Activated CD4-positive, alpha-beta T cell treated with anti-CD3 and anti-CD28 coated beads for 36 hours (primary cell): ENCODE measurements at regions of chr18 and their contacts with region 1.

Region 1: GRCh38 chr18:48445540-48445939 is 36.4 kb upstream of the ZBTB7C start:
- DNase-seq: peak; percentile 85
- ATAC-seq: peak; percentile 76
- H3K4me3 Mint-ChIP-seq: no peak overlapping the region
- H3K27ac Mint-ChIP-seq: no peak overlapping the region
- H3K4me1 Mint-ChIP-seq: peaks cover 3% of the 10 kb centered on the region
- H3K27me3 Mint-ChIP-seq: peaks cover 25% of the 10 kb centered on the region

Region 2: GRCh38 chr18:47772374-47773248 is 672.9 kb before region 1 on chr18:
- CTCF ChIA-PET with region 1: interaction called, 5 read pairs
- POLR2A ChIA-PET with region 1: no interaction called
- intact Hi-C with region 1: loop called (anchors 5 kb)
- DNase-seq: peak; percentile 84
- ATAC-seq: peak; percentile 76
- H3K4me3 Mint-ChIP-seq: no peak overlapping the region
- H3K27ac Mint-ChIP-seq: no peak overlapping the region
- H3K4me1 Mint-ChIP-seq: no peaks in the 10 kb centered on the region
- H3K27me3 Mint-ChIP-seq: peaks cover 2% of the 10 kb centered on the region

Region 3: DNA sequence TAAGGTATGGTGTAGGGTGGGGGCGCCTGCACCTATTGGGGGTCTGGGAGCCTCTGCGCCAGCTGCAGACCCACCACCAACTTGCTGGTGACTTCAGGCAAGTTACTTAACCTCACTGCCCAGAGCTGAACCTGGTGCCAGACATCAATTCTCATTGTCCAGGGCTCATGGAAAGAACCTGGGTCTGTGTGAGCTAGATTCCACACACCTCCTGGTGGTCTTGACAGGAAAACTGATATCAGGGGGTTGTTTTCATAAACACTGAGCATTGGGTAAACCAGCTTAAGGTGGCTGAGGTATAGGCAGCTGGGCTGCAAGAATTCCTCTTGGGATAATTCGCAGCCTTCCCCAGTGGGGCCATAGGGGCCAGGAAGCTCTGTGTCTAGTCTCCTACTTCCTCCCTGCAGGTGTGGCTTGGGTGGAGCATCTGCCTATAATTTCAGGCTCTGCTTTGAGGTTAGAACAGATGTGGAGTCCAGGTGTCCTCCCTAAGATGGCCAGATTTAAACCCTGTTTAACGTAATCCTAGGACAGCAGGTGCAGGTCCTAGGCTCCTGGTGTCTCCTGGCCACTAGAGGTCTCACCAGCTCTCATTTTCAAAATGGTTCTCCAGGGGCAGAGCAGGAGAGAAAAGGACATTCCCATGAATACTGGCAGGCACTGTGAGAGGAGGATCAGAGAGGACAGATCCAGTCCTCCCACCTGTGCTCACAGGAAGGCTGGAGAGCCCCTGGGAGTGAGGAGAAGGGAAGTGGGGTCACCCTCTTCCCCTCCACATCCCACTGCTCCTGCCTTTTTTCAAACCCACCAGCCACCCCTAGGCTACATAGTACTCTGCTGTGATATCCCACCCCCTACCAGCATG is 414.7 kb before region 1 on chr18:
- CTCF ChIA-PET with region 1: interaction called, 13 read pairs
- POLR2A ChIA-PET with region 1: no interaction called
- intact Hi-C with region 1: loop called in 1 of 2 experiments (anchors 1 kb)
- DNase-seq: peak; percentile 41
- ATAC-seq: peak; percentile 33
- H3K4me3 Mint-ChIP-seq: no peak overlapping the region
- H3K27ac Mint-ChIP-seq: no peak overlapping the region
- H3K4me1 Mint-ChIP-seq: no peaks in the 10 kb centered on the region
- H3K27me3 Mint-ChIP-seq: no peaks in the 10 kb centered on the region

Region 4: GRCh38 chr18:48428475-48429177 is 16.9 kb before region 1 on chr18:
- CTCF ChIA-PET with region 1: interaction called, 15 read pairs
- POLR2A ChIA-PET with region 1: no interaction called
- intact Hi-C with region 1: no loop called
- DNase-seq: no peak
- ATAC-seq: no peak
- H3K4me3 Mint-ChIP-seq: no peak overlapping the region
- H3K27ac Mint-ChIP-seq: no peak overlapping the region
- H3K4me1 Mint-ChIP-seq: no peaks in the 10 kb centered on the region
- H3K27me3 Mint-ChIP-seq: peaks cover 46% of the 10 kb centered on the region

Region 5: GRCh38 chr18:48663931-48664847 is 218.6 kb after region 1 on chr18:
- CTCF ChIA-PET with region 1: interaction called, 8 read pairs
- POLR2A ChIA-PET with region 1: no interaction called
- intact Hi-C with region 1: loop called in 1 of 2 experiments (anchors 1 kb)
- DNase-seq: peak; percentile 77
- ATAC-seq: peak; percentile 47
- H3K4me3 Mint-ChIP-seq: no peak overlapping the region
- H3K27ac Mint-ChIP-seq: no peak overlapping the region
- H3K4me1 Mint-ChIP-seq: no peaks in the 10 kb centered on the region
- H3K27me3 Mint-ChIP-seq: peaks cover 3% of the 10 kb centered on the region